Left colon (tissue), 2 donors: ENCODE measurements at regions of chr19 and their contacts with region 1.

Region 1: GRCh38 chr19:48970923-48971395 is 5.8 kb downstream of the FTL start:
- DNase-seq: peak; percentile 61 to 93
- ATAC-seq: peak; percentile 61

Region 2: GRCh38 chr19:48794291-48794966 is 176.5 kb before region 1 on chr19:
- intact Hi-C with region 1: loop called in 1 of 2 experiments (anchors 5 kb)
- DNase-seq: no peak
- ATAC-seq: no peak

Region 3: DNA sequence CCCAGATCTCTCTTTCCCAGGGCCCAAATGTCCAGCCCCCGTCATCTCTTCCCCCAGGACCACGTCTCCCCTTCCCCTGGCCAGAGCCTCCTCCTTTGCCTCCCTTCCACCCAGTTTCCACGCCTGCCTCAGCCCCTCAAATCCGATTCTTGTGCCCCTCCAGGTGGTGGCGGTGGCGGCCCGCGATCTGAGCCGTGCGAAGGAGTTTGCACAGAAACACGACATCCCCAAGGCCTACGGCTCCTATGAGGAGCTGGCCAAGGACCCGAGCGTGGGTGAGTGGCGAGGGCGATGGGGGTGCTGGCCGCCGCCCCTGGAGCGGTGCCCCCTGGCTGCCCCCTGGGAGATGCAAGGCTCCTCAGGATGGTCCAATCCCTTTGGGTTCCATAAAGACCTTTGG is 36.1 kb before region 1 on chr19:
- intact Hi-C with region 1: no loop called
- DNase-seq: no peak
- ATAC-seq: no peak